Activated naive CD8-positive, alpha-beta T cell treated with anti-CD3 and anti-CD28 coated beads, Interleukin-2, amount 10 ng/mL, durations not matched to agents 7 days and 5 days (primary cell): ENCODE measurements at regions of chr18 and their contacts with region 1.

Region 1: GRCh38 chr18:21600526-21601410 is at the start of gene ESCO1:
- DNase-seq: peak; percentile 94
- ATAC-seq: peak; percentile 93
- H3K4me3 Mint-ChIP-seq: peak within 1 kb of the TSS; percentile 97
- H3K27ac Mint-ChIP-seq: peak within 1 kb of the TSS; percentile 97
- H3K4me1 Mint-ChIP-seq: peaks cover 19% of the 10 kb centered on the region
- H3K27me3 Mint-ChIP-seq: no peaks in the 10 kb centered on the region
- total RNA-seq, gene ESCO1: 24.3 to 26.1 TPM

Region 2: DNA sequence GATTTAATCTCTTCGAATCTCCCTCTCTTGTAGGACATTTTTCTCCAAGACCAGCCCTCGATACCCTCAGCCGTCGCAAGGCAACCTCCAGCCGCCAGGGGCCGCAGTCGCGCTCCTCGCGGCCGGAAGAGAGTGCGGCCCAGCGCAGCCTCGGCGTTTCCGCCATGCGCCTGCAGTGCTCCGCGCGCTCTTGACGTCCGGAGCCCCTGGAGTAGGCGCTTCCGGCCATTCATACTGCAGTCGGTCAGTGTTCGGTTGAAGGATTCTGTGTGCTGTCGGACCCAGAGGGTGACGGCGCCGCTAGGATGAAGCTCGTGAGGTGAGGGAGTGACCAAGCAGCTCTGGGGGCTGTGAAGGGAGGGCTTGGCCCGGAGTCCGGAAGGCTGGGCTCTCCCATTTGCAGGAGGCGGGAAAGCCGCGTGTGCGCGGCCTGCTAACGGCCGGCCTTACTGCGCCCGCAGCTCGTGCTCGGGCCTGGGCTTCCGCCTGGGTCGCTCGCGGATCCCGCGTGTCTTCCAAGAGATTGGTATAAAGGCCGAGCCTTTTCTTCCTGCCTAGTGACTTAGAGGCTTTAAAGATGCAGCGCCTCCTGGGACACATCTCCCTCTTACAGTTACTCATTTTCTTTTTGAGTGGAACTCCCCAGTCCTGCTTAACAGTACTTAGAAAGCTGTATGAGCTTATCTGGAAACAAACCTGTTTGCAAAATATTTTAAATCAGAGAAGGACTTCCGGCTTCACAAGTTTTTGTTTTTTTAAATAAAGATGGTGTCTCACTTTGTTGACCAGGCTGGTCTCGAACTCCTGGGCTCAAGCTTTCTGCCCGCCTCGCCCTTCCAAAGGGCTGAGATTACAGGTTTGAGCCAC is 11.6 kb after region 1 on chr18 and contains the start of gene SNRPD1:
- POLR2A ChIA-PET with region 1: interaction called, 95 read pairs
- DNase-seq: peak; percentile 96
- ATAC-seq: peak; percentile 97
- H3K4me3 Mint-ChIP-seq: peak within 1 kb of the TSS; percentile 100
- H3K27ac Mint-ChIP-seq: peak within 1 kb of the TSS; percentile 100
- H3K4me1 Mint-ChIP-seq: peaks cover 25% of the 10 kb centered on the region
- H3K27me3 Mint-ChIP-seq: no peaks in the 10 kb centered on the region
- total RNA-seq, gene SNRPD1: 74.6 to 75.1 TPM

Region 3: GRCh38 chr18:21740724-21741510 is 140.1 kb after region 1 on chr18 and contains the start of gene MIB1:
- POLR2A ChIA-PET with region 1: interaction called, 13 read pairs
- DNase-seq: peak; percentile 99
- ATAC-seq: peak; percentile 72
- H3K4me3 Mint-ChIP-seq: peak within 1 kb of the TSS; percentile 92
- H3K27ac Mint-ChIP-seq: peak within 1 kb of the TSS; percentile 95
- H3K4me1 Mint-ChIP-seq: peaks cover 33% of the 10 kb centered on the region
- H3K27me3 Mint-ChIP-seq: peaks cover 10% of the 10 kb centered on the region
- total RNA-seq, gene MIB1: 34.4 to 40.8 TPM